Naive thymus-derived CD4-positive, alpha-beta T cell (primary cell): ENCODE measurements at regions of chr6 and their contacts with region 1.

Region 1: DNA sequence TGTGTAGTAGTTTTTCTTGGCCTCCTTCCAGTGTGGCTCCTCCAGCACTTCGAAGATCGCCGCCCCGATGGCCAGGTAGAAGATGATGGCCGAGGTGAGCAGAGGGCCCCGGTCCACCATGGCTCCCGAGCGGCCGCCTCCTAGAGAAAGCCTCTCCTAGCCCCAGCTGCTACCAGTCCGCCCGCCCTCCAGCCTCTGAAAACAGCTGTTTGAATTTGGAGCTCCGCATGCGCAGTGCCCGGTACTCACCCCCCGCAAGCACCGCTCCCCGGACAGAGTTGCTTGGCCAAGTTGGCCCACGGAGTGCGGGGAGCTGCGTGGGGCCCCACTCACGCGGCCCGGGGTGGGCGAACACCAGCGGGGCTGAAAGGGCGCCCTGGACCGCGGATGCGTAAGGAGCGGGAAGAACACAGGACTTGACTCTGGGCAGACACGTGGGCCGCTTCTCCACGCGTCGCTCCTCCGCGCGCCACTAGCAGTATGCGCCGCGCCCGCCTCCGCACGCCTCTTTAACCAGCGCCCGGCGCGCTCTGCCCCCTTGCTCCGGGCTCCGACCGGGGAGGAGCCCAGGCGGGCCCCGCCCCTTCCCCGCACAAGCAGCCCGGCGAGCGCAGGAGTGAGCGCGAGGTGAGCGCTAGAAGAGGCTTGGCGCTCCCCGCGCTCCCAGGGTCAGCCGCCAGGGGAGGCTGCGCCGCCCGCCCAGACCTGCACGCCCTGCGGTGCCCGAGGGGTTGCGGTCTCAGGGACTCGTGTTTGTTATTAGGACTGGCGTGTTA is at the start of gene KCNK5:
- DNase-seq: peak; percentile 5 to 91 (median 42)
- ATAC-seq: peak; percentile 88
- H3K4me3 ChIP-seq: peak within 1 kb of the TSS; percentile 54
- H3K4me3 Mint-ChIP-seq: peak within 1 kb of the TSS; percentile 61 to 86 (median 72)
- H3K27ac ChIP-seq: no peak within 1 kb of the TSS
- H3K27ac Mint-ChIP-seq: peak within 1 kb of the TSS in 2 of 9 donors; percentile 51 to 91
- H3K4me1 ChIP-seq: peaks cover 18 to 43% of the 10 kb centered on the region in 2 donors
- H3K4me1 Mint-ChIP-seq: peaks cover 15 to 48% (median 33%) of the 10 kb centered on the region in 7 donors
- H3K27me3 ChIP-seq: no peaks in the 10 kb centered on the region
- H3K27me3 Mint-ChIP-seq: peaks cover 0 to 12% (median 6%) of the 10 kb centered on the region in 5 donors
- total RNA-seq, gene KCNK5: 0.24 to 9.6 (median 0.34) TPM in 3 of 5 experiments, not detected in the others

Region 2: GRCh38 chr6:38639498-38640215 is 589.5 kb before region 1 on chr6 and contains the start of gene BTBD9:
- CTCF ChIA-PET with region 1: no interaction called
- POLR2A ChIA-PET with region 1: no interaction called
- intact Hi-C with region 1: loop called in 1 of 2 experiments (anchors 2 kb)
- DNase-seq: peak; percentile 83 to 92 (median 90)
- ATAC-seq: peak; percentile 87
- H3K4me3 ChIP-seq: peak within 1 kb of the TSS; percentile 90
- H3K4me3 Mint-ChIP-seq: peak within 1 kb of the TSS; percentile 74 to 94 (median 90)
- H3K27ac ChIP-seq: peak within 1 kb of the TSS; percentile 94
- H3K27ac Mint-ChIP-seq: peak within 1 kb of the TSS; percentile 88 to 96 (median 91)
- H3K4me1 ChIP-seq: peaks cover 16 to 22% of the 10 kb centered on the region in 2 donors
- H3K4me1 Mint-ChIP-seq: peaks cover 40 to 65% (median 57%) of the 10 kb centered on the region in 7 donors
- H3K27me3 ChIP-seq: no peaks in the 10 kb centered on the region
- H3K27me3 Mint-ChIP-seq: no peaks in the 10 kb centered on the region
- total RNA-seq, gene BTBD9: 20.6 to 58.8 (median 43.6) TPM

Region 3: DNA sequence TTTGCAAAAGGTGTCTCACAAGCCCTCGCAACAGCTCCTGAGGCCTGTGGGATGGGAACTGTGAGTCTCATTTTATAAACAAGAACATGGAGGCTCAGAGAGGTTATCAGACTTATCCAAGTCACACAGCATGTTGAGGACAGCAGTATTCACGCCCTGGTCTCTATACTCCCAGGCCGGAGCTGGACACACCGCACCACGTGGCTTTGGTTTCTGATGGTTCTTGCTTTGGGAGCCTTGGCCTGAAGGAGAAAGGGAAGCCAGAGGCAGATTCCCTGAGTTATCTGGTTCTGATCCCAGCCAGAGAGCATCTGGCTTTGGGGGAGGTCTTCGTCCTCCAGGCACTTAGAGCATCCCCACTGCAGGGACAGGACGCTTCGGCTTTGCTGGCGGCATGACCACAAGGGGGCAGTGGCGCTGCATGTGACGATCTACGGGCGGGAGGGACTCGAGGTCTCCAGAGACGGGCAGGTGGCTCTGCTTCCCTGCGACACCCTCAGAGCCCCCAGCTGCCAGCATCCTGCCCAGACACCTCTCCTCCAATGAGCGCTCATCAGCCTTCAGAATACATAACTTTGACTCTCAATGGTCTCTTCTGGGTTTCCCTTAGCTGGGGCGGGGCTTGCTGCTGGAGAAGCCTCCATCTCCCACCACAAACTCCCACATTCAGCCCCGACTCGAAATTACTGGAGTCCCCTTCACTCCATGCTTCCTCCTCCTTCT is 62.8 kb before region 1 on chr6:
- CTCF ChIA-PET with region 1: no interaction called
- POLR2A ChIA-PET with region 1: no interaction called
- intact Hi-C with region 1: loop called in 1 of 2 experiments (anchors 2 kb)
- DNase-seq: peak; percentile 26 to 86 (median 66)
- ATAC-seq: peak; percentile 86
- H3K4me3 ChIP-seq: no peak overlapping the region
- H3K4me3 Mint-ChIP-seq: peak overlapping the region in 2 of 10 donors; percentile 34 to 44
- H3K27ac ChIP-seq: no peak overlapping the region
- H3K27ac Mint-ChIP-seq: no peak overlapping the region
- H3K4me1 ChIP-seq: peaks cover 0 to 3% of the 10 kb centered on the region in 2 donors
- H3K4me1 Mint-ChIP-seq: peaks cover 0 to 8% (median 5%) of the 10 kb centered on the region in 7 donors
- H3K27me3 ChIP-seq: no peaks in the 10 kb centered on the region
- H3K27me3 Mint-ChIP-seq: peaks cover 0 to 7% (median 4%) of the 10 kb centered on the region in 5 donors

Region 4: GRCh38 chr6:39218873-39219536 is 10.2 kb before region 1 on chr6:
- CTCF ChIA-PET with region 1: no interaction called
- POLR2A ChIA-PET with region 1: no interaction called
- intact Hi-C with region 1: loop called in 1 of 2 experiments (anchors 1 kb)
- DNase-seq: no peak
- ATAC-seq: peak; percentile 37
- H3K4me3 ChIP-seq: no peak overlapping the region
- H3K4me3 Mint-ChIP-seq: peak overlapping the region in 1 of 10 donors; percentile 49
- H3K27ac ChIP-seq: no peak overlapping the region
- H3K27ac Mint-ChIP-seq: peak overlapping the region in 1 of 9 donors; percentile 76
- H3K4me1 ChIP-seq: no peaks in the 10 kb centered on the region
- H3K4me1 Mint-ChIP-seq: peaks cover 0 to 85% (median 4%) of the 10 kb centered on the region in 7 donors
- H3K27me3 ChIP-seq: no peaks in the 10 kb centered on the region
- H3K27me3 Mint-ChIP-seq: no peaks in the 10 kb centered on the region